ENCODE measurements at regions of chr22 and their contacts with region 1.

Region 1: DNA sequence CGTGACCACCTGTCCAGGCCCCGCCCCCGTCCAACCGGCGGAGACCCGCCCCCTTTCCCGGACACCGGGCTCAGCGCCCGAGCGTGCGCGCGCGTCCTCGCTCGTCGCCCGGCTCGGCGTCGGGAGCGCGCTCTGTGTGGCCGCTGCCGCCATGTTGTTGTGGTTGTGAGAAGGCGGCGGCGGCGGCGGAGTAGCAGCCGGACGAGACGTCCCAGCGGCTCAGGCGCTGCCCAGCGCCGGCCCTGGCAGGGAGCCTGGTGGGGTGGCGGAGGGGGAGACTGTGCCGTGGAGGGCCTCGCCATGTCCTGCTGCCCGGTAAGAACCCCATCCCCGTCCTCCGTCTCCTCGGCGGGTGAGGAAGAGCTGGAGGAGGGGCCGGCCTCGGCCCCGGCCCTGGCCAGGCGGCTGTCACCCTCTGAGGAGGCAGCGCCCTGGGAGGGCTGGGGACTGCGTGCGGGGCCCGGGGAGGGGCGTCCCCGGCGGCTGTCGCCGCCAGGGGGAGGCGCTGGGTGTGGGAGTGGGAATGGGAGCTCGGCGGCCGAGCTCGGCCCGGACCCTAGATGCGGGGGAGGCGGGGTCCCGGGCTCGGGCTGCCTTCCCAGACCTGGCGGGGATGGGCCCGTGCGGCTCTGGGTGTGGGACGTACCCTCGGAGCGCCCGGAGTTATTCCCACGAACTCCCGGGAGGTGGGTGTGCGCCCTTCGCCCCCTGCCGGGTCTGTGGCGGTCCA is at the start of gene MTMR3:
- DNase-seq: peak; percentile 73
- ATAC-seq: peak; percentile 98
- H3K4me3 ChIP-seq: peak within 1 kb of the TSS; percentile 73 to 95 (median 79)
- H3K27ac ChIP-seq: peak within 1 kb of the TSS; percentile 95
- H3K4me1 ChIP-seq: peaks cover 39% of the 10 kb centered on the region
- H3K27me3 ChIP-seq: 0 out of 5 replicates have a peak, but pooled peaks cover 0 to 1% of the 10 kb centered on the region in 2 experiments
- CTCF ChIP-seq: peak; percentile 54
- EP300 ChIP-seq: no peak
- POLR2A ChIP-seq: peak; percentile 60 to 81
- RAD21 ChIP-seq: peak; percentile 70
- total RNA-seq, gene MTMR3: 12.6 and 15.8 TPM in 2 replicates

Region 2: GRCh38 chr22:29580200-29580810 is 302.9 kb before region 1 on chr22:
- CTCF ChIA-PET with region 1: no interaction called
- POLR2A ChIA-PET with region 1: no interaction called
- in situ Hi-C with region 1: no loop called
- intact Hi-C with region 1: no loop called
- DNase-seq: peak; percentile 92
- ATAC-seq: peak; percentile 92
- H3K4me3 ChIP-seq: peak overlapping the region; percentile 65 to 98 (median 83)
- H3K27ac ChIP-seq: peak overlapping the region; percentile 99
- H3K4me1 ChIP-seq: peaks cover 82% of the 10 kb centered on the region
- H3K27me3 ChIP-seq: no peaks in the 10 kb centered on the region; a peak in 1 of 5 replicates
- CTCF ChIP-seq: peak; percentile 35
- EP300 ChIP-seq: peak in 1 of 2 experiments; percentile 35; a peak in 2 of 4 replicates
- POLR2A ChIP-seq: peak; percentile 96 to 99
- RAD21 ChIP-seq: peak; percentile 72

Region 3: DNA sequence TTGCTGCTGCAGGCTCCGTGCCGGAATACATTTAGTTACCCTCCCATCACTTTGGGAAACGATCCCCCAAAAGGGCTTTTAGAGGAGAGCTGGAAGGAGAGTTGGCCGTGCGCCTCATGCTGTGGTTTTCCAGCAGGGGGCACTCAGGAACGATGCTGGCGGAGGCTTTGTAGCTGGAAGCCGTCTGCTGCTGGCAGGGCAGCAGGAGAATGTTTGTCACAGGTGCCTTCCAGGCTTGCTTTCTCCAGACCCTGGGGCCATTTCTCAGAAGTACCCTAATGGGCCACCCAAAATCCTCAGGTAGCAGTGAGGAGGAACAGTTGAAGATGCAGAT is 193.4 kb before region 1 on chr22:
- CTCF ChIA-PET with region 1: no interaction called
- POLR2A ChIA-PET with region 1: no interaction called
- in situ Hi-C with region 1: no loop called
- intact Hi-C with region 1: no loop called
- DNase-seq: peak; percentile 24
- ATAC-seq: peak; percentile 71
- H3K4me3 ChIP-seq: no peak overlapping the region
- H3K27ac ChIP-seq: no peak overlapping the region
- H3K4me1 ChIP-seq: no peaks in the 10 kb centered on the region
- H3K27me3 ChIP-seq: no peaks in the 10 kb centered on the region
- CTCF ChIP-seq: peak; percentile 84
- EP300 ChIP-seq: no peak
- POLR2A ChIP-seq: no peak
- RAD21 ChIP-seq: peak; percentile 61

Region 4: DNA sequence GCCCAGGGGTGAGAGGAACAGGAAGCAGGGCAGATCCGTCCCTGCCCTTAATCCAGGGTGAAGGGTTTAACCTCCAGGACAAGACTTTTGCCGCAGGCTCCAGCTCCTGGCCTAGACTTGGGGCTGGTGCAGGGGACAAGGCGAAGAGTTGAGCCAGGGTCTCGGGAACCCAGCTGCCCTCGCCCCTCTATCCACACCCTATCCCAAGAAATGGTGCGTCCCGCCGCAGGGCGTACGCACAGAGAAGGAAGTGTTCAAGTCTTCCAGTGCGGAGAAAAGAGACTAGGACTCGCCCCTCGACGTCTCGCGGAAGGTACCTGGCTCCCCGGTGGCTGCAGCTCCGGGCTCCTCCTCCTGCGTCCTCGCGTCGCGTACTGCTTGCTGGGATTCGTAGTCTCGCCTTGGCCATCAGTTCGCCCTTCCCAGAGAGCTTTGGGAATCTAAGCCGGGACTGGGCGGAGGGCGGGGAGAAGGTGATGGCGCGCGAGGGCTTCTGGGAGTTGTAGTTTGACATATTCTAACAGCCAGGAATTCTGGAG is 116.5 kb before region 1 on chr22 and contains the start of gene ZMAT5:
- CTCF ChIA-PET with region 1: no interaction called
- POLR2A ChIA-PET with region 1: no interaction called
- in situ Hi-C with region 1: no loop called
- intact Hi-C with region 1: loop called (anchors 2 kb)
- DNase-seq: peak; percentile 96
- ATAC-seq: peak; percentile 94
- H3K4me3 ChIP-seq: peak within 1 kb of the TSS; percentile 95
- H3K27ac ChIP-seq: peak within 1 kb of the TSS; percentile 88
- H3K4me1 ChIP-seq: peaks cover 57% of the 10 kb centered on the region
- H3K27me3 ChIP-seq: peaks cover 0 to 4% of the 10 kb centered on the region in 2 experiments; a peak in 1 of 5 replicates
- CTCF ChIP-seq: no peak
- EP300 ChIP-seq: 0 out of 4 replicates have a peak, but pooled peaks of 1 of the 2 experiments have one; percentile 2
- POLR2A ChIP-seq: peak; percentile 74 to 91
- RAD21 ChIP-seq: no peak
- total RNA-seq, gene ZMAT5: 27.8 and 34.7 TPM in 2 replicates

Region 5: DNA sequence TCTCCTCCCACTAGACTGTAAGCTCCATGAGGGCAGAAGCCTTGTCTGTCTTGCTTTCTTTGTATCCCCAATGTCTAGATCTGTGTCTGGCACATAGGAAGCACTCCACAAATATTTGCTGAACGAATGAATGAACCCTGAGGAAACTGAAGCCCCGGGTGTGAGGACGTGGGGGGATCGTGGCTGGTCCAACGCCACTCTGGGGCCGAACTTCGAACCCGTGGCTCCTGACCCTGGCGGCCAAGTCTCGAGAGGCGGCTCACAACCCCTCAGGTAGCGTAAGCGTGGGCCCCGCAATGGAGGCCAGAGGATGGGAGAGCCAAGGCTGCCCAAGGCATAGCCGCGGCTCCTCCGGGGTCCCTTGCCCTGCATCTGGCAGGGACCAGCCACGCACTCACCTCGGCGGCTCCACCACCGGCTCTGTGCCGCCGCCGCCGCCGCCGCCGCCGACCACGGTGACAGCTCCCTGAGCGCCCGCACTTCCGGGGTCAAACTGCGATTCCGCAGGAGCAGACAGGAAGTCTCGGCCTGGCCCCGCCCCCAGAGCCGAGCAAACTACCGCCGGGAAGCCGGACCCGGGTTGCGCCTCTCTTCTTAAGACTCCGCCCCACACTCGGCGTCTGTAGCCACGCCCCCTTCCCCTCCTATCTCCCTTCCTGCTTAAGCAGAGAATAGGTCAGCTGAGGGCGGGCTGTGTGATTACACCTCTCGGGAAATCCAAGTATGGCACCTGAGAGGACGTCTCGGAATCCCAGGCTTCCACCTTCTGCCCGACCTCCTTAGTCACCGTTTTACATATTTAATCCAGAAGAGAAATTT is 45.2 kb before region 1 on chr22 and contains the start of gene ASCC2:
- CTCF ChIA-PET with region 1: no interaction called
- POLR2A ChIA-PET with region 1: interaction called, 10 read pairs
- in situ Hi-C with region 1: no loop called
- intact Hi-C with region 1: no loop called
- DNase-seq: peak; percentile 96
- ATAC-seq: peak; percentile 96
- H3K4me3 ChIP-seq: peak within 1 kb of the TSS; percentile 65 to 96 (median 82)
- H3K27ac ChIP-seq: peak within 1 kb of the TSS; percentile 52
- H3K4me1 ChIP-seq: peaks cover 39% of the 10 kb centered on the region
- H3K27me3 ChIP-seq: no peaks in the 10 kb centered on the region; a peak in 2 of 5 replicates
- CTCF ChIP-seq: no peak
- EP300 ChIP-seq: no peak; a peak in 1 of 4 replicates
- POLR2A ChIP-seq: peak; percentile 68 to 84
- RAD21 ChIP-seq: peak; percentile 42
- total RNA-seq, gene ASCC2: 24.3 and 26.3 TPM in 2 replicates

Region 6: DNA sequence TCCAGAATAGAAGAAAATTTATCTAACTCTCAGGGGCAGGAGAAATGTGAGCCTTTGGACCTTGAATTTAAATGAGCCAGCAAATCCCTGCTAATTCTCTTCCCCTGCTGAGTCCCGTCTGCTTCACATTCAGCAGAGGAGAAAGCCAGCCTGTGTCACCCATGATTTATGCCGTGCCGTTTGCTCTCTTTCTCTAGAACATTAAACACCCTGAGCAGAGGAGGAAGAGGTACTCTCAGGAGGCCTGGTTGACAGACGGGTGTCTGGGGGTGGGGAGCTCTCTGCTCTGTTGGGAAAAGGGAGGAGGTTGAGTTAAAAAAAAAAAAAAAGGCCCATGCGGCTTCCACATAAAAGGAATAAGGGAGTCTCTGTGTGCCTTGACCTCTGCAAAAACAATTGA is 11.5 kb before region 1 on chr22:
- CTCF ChIA-PET with region 1: no interaction called
- POLR2A ChIA-PET with region 1: interaction called, 19 read pairs
- in situ Hi-C with region 1: no loop called
- intact Hi-C with region 1: no loop called
- DNase-seq: peak; percentile 23
- ATAC-seq: peak; percentile 86
- H3K4me3 ChIP-seq: peak overlapping the region in 2 of 3 experiments; percentile 28 to 48; a peak in 5 of 6 replicates
- H3K27ac ChIP-seq: no peak overlapping the region
- H3K4me1 ChIP-seq: peaks cover 26% of the 10 kb centered on the region
- H3K27me3 ChIP-seq: peaks cover 0 to 5% of the 10 kb centered on the region in 2 experiments; a peak in 2 of 5 replicates
- CTCF ChIP-seq: no peak
- EP300 ChIP-seq: no peak
- POLR2A ChIP-seq: no peak
- RAD21 ChIP-seq: no peak

Region 7: GRCh38 chr22:29932136-29932535 is 48.9 kb after region 1 on chr22:
- CTCF ChIA-PET with region 1: no interaction called
- POLR2A ChIA-PET with region 1: no interaction called
- in situ Hi-C with region 1: no loop called
- intact Hi-C with region 1: no loop called
- DNase-seq: no peak
- ATAC-seq: no peak
- H3K4me3 ChIP-seq: no peak overlapping the region
- H3K27ac ChIP-seq: no peak overlapping the region
- H3K4me1 ChIP-seq: no peaks in the 10 kb centered on the region
- H3K27me3 ChIP-seq: no peaks in the 10 kb centered on the region
- CTCF ChIP-seq: no peak
- EP300 ChIP-seq: no peak
- POLR2A ChIP-seq: no peak
- RAD21 ChIP-seq: no peak

Region 8: GRCh38 chr22:29994027-29994715 is 111.0 kb after region 1 on chr22:
- CTCF ChIA-PET with region 1: no interaction called
- POLR2A ChIA-PET with region 1: no interaction called
- in situ Hi-C with region 1: no loop called
- intact Hi-C with region 1: loop called (anchors 10 kb)
- DNase-seq: peak; percentile 62
- ATAC-seq: peak; percentile 63
- H3K4me3 ChIP-seq: no peak overlapping the region
- H3K27ac ChIP-seq: peak overlapping the region; percentile 17
- H3K4me1 ChIP-seq: peaks cover 37% of the 10 kb centered on the region
- H3K27me3 ChIP-seq: no peaks in the 10 kb centered on the region
- CTCF ChIP-seq: peak; percentile 38
- EP300 ChIP-seq: 0 out of 4 replicates have a peak, but pooled peaks of 1 of the 2 experiments have one; percentile 37
- POLR2A ChIP-seq: no peak
- RAD21 ChIP-seq: no peak